Breast epithelium (tissue), 4 donors: ENCODE measurements at regions of chr5 and their contacts with region 1.

Region 1: DNA sequence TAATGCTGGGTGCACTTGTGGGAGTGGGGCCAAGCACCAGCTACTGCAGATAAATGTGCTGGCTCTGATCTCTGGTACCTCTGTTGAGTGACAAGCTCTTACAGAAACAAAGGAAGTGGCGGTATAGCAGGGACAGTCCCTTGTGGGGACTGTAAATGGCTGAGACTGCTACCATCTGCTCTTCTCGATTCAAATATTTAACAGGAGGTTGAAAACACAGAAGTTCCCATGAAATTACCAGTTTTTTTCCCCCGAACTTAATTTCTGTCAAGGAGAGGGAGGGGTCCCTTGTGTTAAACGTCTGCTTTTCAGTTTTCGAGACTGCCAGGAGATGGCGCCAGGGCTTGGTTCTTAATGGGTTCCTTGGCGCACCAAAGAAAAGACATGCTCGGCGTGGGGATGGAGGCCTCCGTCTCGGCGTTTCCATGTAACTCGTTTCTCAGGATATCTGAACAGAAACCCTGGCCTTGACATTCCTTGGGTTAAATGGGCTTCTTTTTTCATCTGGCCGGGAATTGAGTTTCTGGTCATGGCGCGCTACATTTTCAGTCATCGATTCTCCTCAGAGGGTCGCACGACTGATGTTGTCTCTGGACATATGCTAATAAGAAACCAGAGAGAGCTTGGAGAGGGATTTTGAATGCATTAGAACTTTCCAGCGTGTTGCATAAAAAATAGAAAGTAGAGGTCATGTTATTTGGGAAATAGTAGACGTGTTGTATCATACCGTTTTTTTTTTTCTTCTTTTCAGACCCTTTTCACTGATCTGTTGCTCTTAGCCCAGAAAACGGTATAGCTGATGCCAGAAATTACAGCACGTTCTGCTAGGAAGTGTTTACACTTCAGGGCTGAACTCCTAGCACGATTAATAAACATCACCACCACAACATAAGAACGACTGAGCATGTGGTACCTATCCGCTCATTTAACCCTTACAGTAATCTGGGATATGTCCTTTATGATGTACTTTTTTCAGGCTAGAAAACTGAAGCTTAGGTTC is 64.0 kb downstream of the CARTPT start:
- DNase-seq: peak; percentile 59 to 79
- H3K4me3 ChIP-seq: peak overlapping the region; percentile 20 to 40 (median 30)
- H3K27ac ChIP-seq: no peak overlapping the region
- H3K4me1 ChIP-seq: no peaks in the 10 kb centered on the region
- H3K27me3 ChIP-seq: no peaks in the 10 kb centered on the region
- CTCF ChIP-seq: peak; percentile 55 to 91 (median 81)
- POLR2A ChIP-seq: no peak

Region 2: DNA sequence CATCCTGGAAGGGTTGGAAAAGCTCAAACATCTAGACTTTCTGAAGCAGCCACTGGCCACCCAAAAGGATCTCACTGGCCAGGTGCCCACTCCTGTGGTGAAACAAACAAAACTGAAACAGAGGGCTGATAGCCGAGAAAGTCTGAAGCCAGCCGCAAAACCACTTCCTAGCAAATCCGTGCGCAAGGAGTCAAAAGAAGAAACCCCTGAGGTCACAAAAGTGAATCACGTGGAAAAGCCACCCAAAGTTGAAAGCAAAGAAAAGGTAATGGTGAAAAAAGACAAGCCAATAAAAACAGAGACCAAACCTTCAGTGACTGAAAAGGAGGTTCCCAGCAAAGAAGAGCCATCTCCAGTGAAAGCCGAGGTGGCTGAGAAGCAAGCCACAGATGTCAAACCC is 411.8 kb after region 1 on chr5:
- intact Hi-C with region 1: no loop called
- DNase-seq: no peak
- H3K4me3 ChIP-seq: no peak overlapping the region
- H3K27ac ChIP-seq: no peak overlapping the region
- H3K4me1 ChIP-seq: no peaks in the 10 kb centered on the region
- H3K27me3 ChIP-seq: no peaks in the 10 kb centered on the region
- CTCF ChIP-seq: no peak
- POLR2A ChIP-seq: no peak

Region 3: DNA sequence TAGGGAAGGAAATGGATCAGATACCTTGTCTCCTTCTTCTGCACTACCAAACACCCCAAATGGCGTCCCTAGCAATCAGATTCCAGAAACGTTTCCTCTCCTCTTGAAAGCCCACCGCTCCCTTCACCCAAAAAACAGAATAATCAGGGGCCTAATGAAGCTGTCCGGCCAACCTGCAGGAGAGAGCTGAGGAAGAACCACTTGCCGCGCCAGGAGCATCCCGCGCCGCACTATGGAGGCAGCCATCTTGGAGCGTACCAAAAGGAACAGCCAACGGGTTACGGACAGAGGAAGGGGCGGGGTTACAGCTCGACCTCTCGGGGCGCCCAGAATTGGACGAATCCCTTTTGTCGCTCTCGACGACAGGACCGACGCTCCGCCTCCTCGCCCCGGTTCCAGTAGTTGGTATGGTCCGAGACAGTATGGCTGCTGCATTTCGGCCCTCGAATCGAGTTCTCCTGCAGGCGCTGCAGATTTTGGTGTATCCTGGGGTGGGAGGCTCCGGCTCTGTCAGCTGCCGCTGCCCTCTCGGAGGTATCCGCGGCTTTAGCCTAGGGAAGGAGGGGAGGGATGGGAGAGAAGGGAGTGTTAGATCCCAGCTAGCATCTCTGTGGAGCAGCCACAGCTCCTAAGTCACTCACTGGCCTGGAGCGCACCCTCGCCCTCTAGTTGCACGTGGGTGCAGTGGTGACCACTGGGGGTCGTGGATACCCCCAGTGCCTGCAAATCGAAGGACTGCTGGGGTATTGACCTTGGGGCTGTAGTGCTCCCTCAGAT is 537.1 kb after region 1 on chr5 and contains the starts of genes MRPS27 and PTCD2:
- intact Hi-C with region 1: loop called (anchors 10 kb)
- DNase-seq: peak; percentile 92 to 95
- H3K4me3 ChIP-seq: peak within 1 kb of the TSS; percentile 60 to 90 (median 85)
- H3K27ac ChIP-seq: peak within 1 kb of the TSS; percentile 72 to 76
- H3K4me1 ChIP-seq: no peaks in the 10 kb centered on the region
- H3K27me3 ChIP-seq: no peaks in the 10 kb centered on the region
- CTCF ChIP-seq: peak in 1 of 3 donors; percentile 7
- POLR2A ChIP-seq: peak; percentile 17
- total RNA-seq, gene MRPS27: 47.8 to 71.3 (median 51.8) TPM
- total RNA-seq, gene PTCD2: 5.6 to 10.1 (median 7.5) TPM